ENCODE measurements at regions of chr12 and their contacts with region 1.

Region 1: GRCh38 chr12:16220120-16220519 is 57.4 kb downstream of the SLC15A5 start:
- DNase-seq: no peak
- H3K4me3 ChIP-seq: no peak overlapping the region
- H3K27ac ChIP-seq: no peak overlapping the region
- H3K4me1 ChIP-seq: no peaks in the 10 kb centered on the region
- H3K27me3 ChIP-seq: no peaks in the 10 kb centered on the region
- CTCF ChIP-seq: no peak
- POLR2A ChIP-seq: no peak

Region 2: GRCh38 chr12:15662303-15662980 is 557.7 kb before region 1 on chr12:
- intact Hi-C with region 1: loop called (anchors 5 kb)
- DNase-seq: no peak
- H3K4me3 ChIP-seq: no peak overlapping the region
- H3K27ac ChIP-seq: no peak overlapping the region
- H3K4me1 ChIP-seq: peaks cover 6% of the 10 kb centered on the region
- H3K27me3 ChIP-seq: no peaks in the 10 kb centered on the region
- CTCF ChIP-seq: no peak
- POLR2A ChIP-seq: no peak